CD4-positive, alpha-beta T cell (primary cell): ENCODE measurements at regions of chr20 and their contacts with region 1.

Region 1: GRCh38 chr20:1734269-1734858 is 76.8 kb upstream of the SIRPG start:
- DNase-seq: peak in 10 of 14 experiments; percentile 6 to 77 (median 26)
- ATAC-seq: peak; percentile 71
- H3K4me3 ChIP-seq: no peak overlapping the region
- H3K4me3 Mint-ChIP-seq: peak overlapping the region; percentile 40
- H3K27ac ChIP-seq: no peak overlapping the region
- H3K27ac Mint-ChIP-seq: no peak overlapping the region
- H3K4me1 ChIP-seq: peaks cover 28% of the 10 kb centered on the region
- H3K4me1 Mint-ChIP-seq: no peaks in the 10 kb centered on the region
- H3K27me3 ChIP-seq: peaks cover 0 to 3% of the 10 kb centered on the region in 2 experiments
- H3K27me3 Mint-ChIP-seq: no peaks in the 10 kb centered on the region
- CTCF ChIP-seq: peak; percentile 87

Region 2: DNA sequence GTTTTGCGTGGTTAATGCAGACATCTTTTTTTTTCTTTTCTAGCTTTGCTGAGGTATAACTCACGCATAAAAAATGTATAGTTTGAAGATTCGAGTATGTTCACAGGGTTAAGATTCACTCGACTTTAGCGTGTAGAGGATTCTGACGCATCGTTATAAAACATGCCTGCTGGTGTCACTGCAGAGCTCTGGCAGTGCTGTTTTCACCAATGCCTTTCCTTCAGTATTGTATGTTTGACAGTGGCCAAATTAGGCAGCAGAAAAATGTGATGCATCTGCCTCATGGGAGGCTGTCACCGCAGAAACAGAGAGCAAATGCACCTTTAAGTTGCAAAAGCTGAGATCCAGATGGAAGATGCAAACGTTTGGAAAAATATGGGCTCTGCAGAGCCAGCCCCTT is 225.1 kb before region 1 on chr20:
- CTCF ChIA-PET with region 1: interaction called, 24 read pairs
- POLR2A ChIA-PET with region 1: interaction called, 5 read pairs
- intact Hi-C with region 1: loop called (anchors 1 kb)
- DNase-seq: peak in 10 of 14 experiments; percentile 3 to 58 (median 23)
- ATAC-seq: peak; percentile 84
- H3K4me3 ChIP-seq: no peak overlapping the region
- H3K4me3 Mint-ChIP-seq: no peak overlapping the region
- H3K27ac ChIP-seq: no peak overlapping the region
- H3K27ac Mint-ChIP-seq: no peak overlapping the region
- H3K4me1 ChIP-seq: no peaks in the 10 kb centered on the region
- H3K4me1 Mint-ChIP-seq: no peaks in the 10 kb centered on the region
- H3K27me3 ChIP-seq: peaks cover 0 to 3% of the 10 kb centered on the region in 2 experiments
- H3K27me3 Mint-ChIP-seq: no peaks in the 10 kb centered on the region
- CTCF ChIP-seq: peak; percentile 57

Region 3: DNA sequence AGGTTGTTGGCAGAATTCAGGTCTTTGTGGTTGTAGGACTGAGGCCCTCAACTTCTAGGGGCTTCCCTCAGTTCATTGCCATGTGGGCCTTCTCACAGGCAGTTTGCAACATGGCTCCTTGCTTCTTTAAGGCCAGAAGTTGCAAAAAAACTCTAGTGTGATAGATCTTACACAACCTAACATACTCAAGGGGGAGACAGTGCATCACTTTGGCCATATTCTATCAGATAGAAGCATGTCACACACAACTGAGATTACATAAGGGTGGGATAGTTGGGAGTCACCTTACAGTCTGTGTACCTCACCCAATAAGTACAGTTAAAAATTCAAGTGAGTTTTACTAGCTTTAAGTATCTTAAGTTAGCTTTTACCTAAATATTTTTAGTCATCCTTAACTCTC is 178.4 kb before region 1 on chr20:
- CTCF ChIA-PET with region 1: interaction called, 13 read pairs
- POLR2A ChIA-PET with region 1: interaction called, 5 read pairs
- intact Hi-C with region 1: loop called (anchors 1 kb)
- DNase-seq: peak in 4 of 14 experiments; percentile 12 to 62 (median 48)
- ATAC-seq: peak; percentile 58
- H3K4me3 ChIP-seq: no peak overlapping the region
- H3K4me3 Mint-ChIP-seq: no peak overlapping the region
- H3K27ac ChIP-seq: no peak overlapping the region
- H3K27ac Mint-ChIP-seq: no peak overlapping the region
- H3K4me1 ChIP-seq: no peaks in the 10 kb centered on the region
- H3K4me1 Mint-ChIP-seq: peaks cover 8% of the 10 kb centered on the region
- H3K27me3 ChIP-seq: no peaks in the 10 kb centered on the region
- H3K27me3 Mint-ChIP-seq: no peaks in the 10 kb centered on the region
- CTCF ChIP-seq: peak; percentile 48

Region 4: GRCh38 chr20:1657556-1658334 is 76.6 kb before region 1 on chr20 and contains the start of gene SIRPG:
- CTCF ChIA-PET with region 1: interaction called, 4 read pairs
- POLR2A ChIA-PET with region 1: interaction called, 6 read pairs
- intact Hi-C with region 1: loop called in 1 of 2 experiments (anchors 5 kb)
- DNase-seq: peak in 7 of 14 experiments; percentile 20 to 72 (median 55)
- ATAC-seq: peak; percentile 68
- H3K4me3 ChIP-seq: peak within 1 kb of the TSS; percentile 69
- H3K4me3 Mint-ChIP-seq: peak within 1 kb of the TSS; percentile 94
- H3K27ac ChIP-seq: peak within 1 kb of the TSS; percentile 76 to 77
- H3K27ac Mint-ChIP-seq: peak within 1 kb of the TSS; percentile 95
- H3K4me1 ChIP-seq: peaks cover 65% of the 10 kb centered on the region
- H3K4me1 Mint-ChIP-seq: peaks cover 93% of the 10 kb centered on the region
- H3K27me3 ChIP-seq: no peaks in the 10 kb centered on the region
- H3K27me3 Mint-ChIP-seq: no peaks in the 10 kb centered on the region
- CTCF ChIP-seq: no peak
- total RNA-seq, gene SIRPG: 28.0 to 28.3 TPM